Dendritic cell treated with granulocyte-macrophage colony-stimulating factor and Interleukin-4, amounts not matched to agents 40 ng/mL and 50 ng/mL, for 4 days (primary cell): ENCODE measurements at regions of chr21 and their contacts with region 1.

Region 1: DNA sequence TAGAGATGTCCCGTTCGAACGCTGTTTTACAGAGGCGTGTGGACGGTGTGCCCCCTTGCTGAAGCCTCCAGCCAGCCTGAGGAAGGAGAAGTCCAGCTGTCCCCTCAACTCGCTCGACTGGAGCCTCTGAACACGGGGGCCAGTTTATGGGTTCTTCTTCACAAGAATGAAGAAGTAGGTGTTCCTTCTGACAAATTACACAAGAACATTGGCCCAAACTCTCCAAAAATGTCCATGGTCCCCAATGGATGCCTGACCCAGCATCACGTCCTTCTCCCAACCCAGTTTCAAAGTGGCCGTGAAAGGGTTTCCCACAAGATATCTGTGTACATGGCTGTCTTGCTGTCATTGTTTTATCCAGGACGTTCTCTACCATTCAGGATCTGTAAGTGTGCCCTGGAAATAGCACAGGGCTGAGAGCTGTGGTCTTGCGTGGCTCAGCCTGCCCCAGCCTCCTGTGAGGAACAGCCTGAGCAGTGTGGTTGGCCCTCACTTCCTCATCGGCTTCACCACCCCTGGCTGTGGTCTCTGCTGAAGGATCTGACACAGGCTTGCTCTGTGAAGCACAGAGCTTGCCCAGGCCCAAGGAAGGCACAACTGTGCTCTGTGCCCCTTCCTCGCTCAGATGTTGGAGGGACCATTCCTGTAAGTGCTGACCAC is 1.0 kb upstream of the S100B start:
- H3K4me3 Mint-ChIP-seq: peak overlapping the region; percentile 39
- H3K27ac Mint-ChIP-seq: peak overlapping the region; percentile 92
- H3K4me1 Mint-ChIP-seq: peaks cover 58% of the 10 kb centered on the region
- H3K27me3 Mint-ChIP-seq: no peaks in the 10 kb centered on the region

Region 2: DNA sequence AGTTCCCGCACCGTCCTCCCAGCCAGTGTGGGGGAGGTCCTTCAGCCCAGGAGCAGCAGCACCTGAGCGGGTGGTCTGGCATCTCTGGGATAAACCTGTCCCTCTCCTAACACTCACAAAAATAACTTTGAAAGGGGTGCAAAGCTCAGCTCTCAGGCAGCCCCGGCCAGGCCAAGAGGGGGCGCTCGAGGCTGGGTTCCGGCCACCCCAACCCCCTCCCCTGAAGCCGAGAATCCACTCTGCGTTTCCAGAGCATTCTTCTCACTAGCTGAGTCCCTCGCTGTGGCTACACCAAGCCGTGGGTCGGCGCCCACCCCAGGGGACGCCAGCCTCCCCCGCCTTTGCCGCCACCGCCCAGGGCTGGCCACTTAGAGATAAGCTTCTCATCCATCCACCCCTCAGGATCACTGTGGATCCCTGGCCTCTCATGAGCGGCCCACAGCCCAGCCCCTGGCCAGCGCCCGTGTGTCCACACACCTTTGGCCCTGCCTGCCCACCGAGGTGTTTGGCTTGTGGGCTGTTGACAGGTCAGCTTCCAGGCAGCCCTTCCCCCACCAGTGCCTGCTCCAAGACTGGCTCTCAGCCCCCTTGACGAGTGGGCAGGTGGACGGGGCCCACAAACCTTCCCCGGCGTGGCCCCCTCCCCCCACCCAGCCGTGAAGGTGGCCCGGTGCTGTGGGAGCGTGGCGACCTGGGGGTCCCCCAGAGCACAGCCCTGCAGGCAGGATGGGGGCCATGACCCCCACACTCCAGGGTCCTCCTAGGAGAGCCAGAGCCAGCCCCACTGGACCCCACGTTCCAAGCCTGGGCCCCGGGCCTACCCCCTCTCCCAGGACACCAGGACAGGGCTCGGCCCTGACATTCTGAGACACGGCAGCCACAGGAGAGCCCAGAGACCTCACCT is 452.4 kb before region 1 on chr21:
- intact Hi-C with region 1: no loop called
- H3K4me3 Mint-ChIP-seq: no peak overlapping the region
- H3K27ac Mint-ChIP-seq: no peak overlapping the region
- H3K4me1 Mint-ChIP-seq: no peaks in the 10 kb centered on the region
- H3K27me3 Mint-ChIP-seq: no peaks in the 10 kb centered on the region

Region 3: GRCh38 chr21:46621457-46622182 is 15.7 kb after region 1 on chr21:
- intact Hi-C with region 1: loop called (anchors 2 kb)
- H3K4me3 Mint-ChIP-seq: no peak overlapping the region
- H3K27ac Mint-ChIP-seq: peak overlapping the region; percentile 91
- H3K4me1 Mint-ChIP-seq: peaks cover 44% of the 10 kb centered on the region
- H3K27me3 Mint-ChIP-seq: no peaks in the 10 kb centered on the region

Region 4: GRCh38 chr21:46635324-46636172 is 29.7 kb after region 1 on chr21 and contains the start of gene PRMT2:
- intact Hi-C with region 1: loop called (anchors 1 kb)
- H3K4me3 Mint-ChIP-seq: peak within 1 kb of the TSS; percentile 97
- H3K27ac Mint-ChIP-seq: peak within 1 kb of the TSS; percentile 95
- H3K4me1 Mint-ChIP-seq: peaks cover 42% of the 10 kb centered on the region
- H3K27me3 Mint-ChIP-seq: no peaks in the 10 kb centered on the region